ENCODE measurements at regions of chr12 and their contacts with region 1.

Region 1: DNA sequence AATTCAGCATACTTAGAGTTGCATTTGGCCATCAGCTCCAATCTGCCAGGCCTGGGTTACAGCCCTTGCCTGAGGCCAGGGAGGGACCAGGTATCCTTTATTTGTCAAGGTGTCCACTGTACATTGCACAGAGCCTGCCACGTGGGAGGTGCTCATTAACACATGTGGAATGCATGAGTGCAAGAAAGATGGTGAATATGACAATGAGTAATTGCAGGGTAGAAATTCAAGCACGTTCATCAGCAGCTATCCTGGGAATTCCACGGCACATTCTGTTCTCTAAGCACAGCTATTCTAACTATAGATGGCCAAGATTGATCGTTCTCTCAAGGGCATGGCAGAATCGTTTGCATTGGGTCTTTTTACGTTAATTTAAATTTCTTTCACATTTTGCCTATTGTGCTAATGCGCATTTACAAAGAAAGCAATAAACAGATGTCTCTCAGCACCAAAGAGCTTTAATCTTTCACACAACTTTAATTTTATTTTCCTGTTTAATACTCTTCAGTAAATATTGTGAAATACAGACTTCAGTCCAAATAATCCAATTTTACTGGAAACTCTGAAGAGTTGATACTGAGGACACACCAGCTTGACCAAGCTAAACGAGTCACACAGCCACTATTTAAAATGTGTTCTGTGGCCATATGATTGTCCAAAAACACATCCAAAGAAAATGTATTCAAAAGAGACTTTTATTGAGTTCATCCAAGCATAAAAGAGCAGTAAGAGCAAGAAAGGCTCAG is 1025.7 kb upstream of the TMEM132C start:
- DNase-seq: peak; percentile 76
- H3K4me3 Mint-ChIP-seq: peak overlapping the region; percentile 26
- H3K27ac Mint-ChIP-seq: no peak overlapping the region
- H3K4me1 Mint-ChIP-seq: peaks cover 58% of the 10 kb centered on the region
- H3K27me3 Mint-ChIP-seq: no peaks in the 10 kb centered on the region
- CTCF ChIP-seq: no peak

Region 2: DNA sequence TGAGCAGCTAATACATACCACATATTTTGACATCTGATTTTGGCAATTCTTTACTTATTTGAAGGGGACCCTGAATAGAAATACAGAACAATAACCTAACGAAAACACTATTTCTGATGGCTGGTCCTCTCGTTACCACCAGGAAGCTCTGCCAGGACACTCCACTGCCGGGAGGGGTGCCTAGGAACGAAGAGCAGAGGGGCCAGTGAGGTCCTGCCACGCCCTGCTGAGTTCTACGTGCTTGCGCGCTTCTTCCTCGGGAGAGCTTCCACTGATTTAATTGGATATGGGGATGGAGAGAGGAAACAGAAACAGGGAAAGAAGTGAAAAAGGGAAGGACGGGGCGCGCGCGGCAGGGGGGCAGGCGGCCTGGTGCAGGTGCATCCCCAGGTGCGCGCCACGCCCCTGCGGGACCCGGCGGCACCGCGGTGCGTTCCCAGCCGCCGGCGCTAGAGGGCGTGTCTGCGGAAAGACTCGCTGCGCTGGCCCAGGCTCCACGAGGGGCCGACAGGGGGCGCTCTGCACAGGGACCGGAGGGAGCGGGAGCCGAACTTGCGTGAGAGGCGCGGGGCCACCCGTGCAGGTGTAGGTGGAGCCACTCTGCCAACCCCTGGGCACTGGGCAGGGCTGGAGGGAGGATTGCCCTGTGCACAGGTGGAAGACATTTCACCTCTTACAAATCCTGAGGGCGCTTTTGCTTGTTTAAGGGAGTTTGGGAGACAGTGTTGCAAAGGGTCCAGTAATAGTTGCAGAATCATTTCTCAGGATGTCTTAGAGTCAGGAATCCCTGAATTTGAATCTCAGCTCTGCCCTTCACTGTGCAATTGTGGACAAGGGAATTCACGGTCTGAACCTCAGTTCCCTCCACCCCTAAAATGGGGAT is 39.4 kb after region 1 on chr12:
- CTCF ChIA-PET with region 1: no interaction called
- POLR2A ChIA-PET with region 1: no interaction called
- intact Hi-C with region 1: loop called (anchors 2 kb)
- DNase-seq: no peak
- H3K4me3 Mint-ChIP-seq: no peak overlapping the region
- H3K27ac Mint-ChIP-seq: no peak overlapping the region
- H3K4me1 Mint-ChIP-seq: peaks cover 11% of the 10 kb centered on the region
- H3K27me3 Mint-ChIP-seq: no peaks in the 10 kb centered on the region
- CTCF ChIP-seq: peak; percentile 48

Measured in MCF 10A (cell line).